ENCODE measurements at regions of chr5 and their contacts with region 1.

Region 1: GRCh38 chr5:180021805-180022217 is 49.7 kb downstream of the RNF130 start:
- DNase-seq: no peak
- ATAC-seq: no peak
- H3K4me3 ChIP-seq: no peak overlapping the region
- H3K4me3 Mint-ChIP-seq: no peak overlapping the region
- H3K27ac ChIP-seq: no peak overlapping the region
- H3K27ac Mint-ChIP-seq: no peak overlapping the region
- H3K4me1 ChIP-seq: no peaks in the 10 kb centered on the region
- H3K4me1 Mint-ChIP-seq: no peaks in the 10 kb centered on the region
- H3K27me3 ChIP-seq: no peaks in the 10 kb centered on the region
- H3K27me3 Mint-ChIP-seq: no peaks in the 10 kb centered on the region
- CTCF ChIP-seq: no peak

Region 2: GRCh38 chr5:180090098-180090768 is 68.4 kb after region 1 on chr5:
- CTCF ChIA-PET with region 1: no interaction called
- POLR2A ChIA-PET with region 1: no interaction called
- intact Hi-C with region 1: loop called in 1 of 2 experiments (anchors 5 kb)
- DNase-seq: peak; percentile 64 to 91 (median 78)
- ATAC-seq: peak; percentile 58
- H3K4me3 ChIP-seq: peak overlapping the region; percentile 64
- H3K4me3 Mint-ChIP-seq: peak overlapping the region; percentile 81
- H3K27ac ChIP-seq: no peak overlapping the region
- H3K27ac Mint-ChIP-seq: peak overlapping the region; percentile 88
- H3K4me1 ChIP-seq: peaks cover 21% of the 10 kb centered on the region
- H3K4me1 Mint-ChIP-seq: peaks cover 19% of the 10 kb centered on the region
- H3K27me3 ChIP-seq: no peaks in the 10 kb centered on the region
- H3K27me3 Mint-ChIP-seq: peaks cover 3% of the 10 kb centered on the region
- CTCF ChIP-seq: peak; percentile 83

Measured in CD4-positive, alpha-beta T cell (primary cell).